ENCODE measurements at regions of chr7 and their contacts with region 1.

Region 1: DNA sequence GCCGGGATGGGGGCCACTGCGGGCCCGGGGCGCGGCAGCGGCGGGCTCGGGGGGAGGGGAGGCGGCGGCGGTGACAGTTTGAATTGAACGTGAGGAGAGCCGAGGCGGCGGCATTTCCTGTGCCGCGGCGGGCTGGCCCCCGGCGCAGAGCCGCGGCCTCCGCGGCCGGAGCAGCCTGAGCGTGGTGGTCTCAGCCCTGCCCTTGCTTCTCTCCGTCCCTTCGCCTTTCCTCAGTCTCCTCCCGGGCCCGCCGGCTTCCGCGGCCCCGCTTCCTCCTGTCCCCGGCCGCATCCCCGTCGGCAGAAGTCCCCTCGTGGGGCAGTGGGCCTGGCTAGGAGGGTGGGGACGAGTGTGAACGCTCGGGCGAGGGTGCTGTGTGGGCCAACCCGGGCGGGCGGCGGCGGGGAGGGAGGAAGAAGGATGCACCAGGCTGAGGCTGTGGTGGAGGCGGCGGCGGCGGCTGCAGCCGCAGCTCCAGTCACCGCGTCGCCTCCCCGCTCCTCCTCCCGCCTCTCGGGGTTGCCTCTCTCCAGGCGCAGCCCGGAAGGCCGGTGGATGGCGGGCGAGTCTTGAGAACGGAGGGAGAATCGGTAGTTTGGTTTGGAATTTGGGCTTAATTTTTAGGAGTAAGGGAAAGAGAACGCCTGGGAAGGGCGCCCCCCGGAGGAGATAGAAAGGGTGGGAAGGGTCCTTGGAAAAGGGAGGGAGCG is 690 bp downstream of the SEPTIN7 start:
- DNase-seq: peak; percentile 76
- H3K4me3 ChIP-seq: peak overlapping the region; percentile 74
- H3K27ac ChIP-seq: peak overlapping the region; percentile 98
- H3K4me1 ChIP-seq: peaks cover 3% of the 10 kb centered on the region
- H3K27me3 ChIP-seq: no peaks in the 10 kb centered on the region
- CTCF ChIP-seq: peak; percentile 46

Region 2: GRCh38 chr7:35714862-35715261 is 86.7 kb before region 1 on chr7:
- intact Hi-C with region 1: loop called (anchors 5 kb)
- DNase-seq: no peak
- H3K4me3 ChIP-seq: no peak overlapping the region
- H3K27ac ChIP-seq: no peak overlapping the region
- H3K4me1 ChIP-seq: no peaks in the 10 kb centered on the region
- H3K27me3 ChIP-seq: no peaks in the 10 kb centered on the region
- CTCF ChIP-seq: no peak

Region 3: DNA sequence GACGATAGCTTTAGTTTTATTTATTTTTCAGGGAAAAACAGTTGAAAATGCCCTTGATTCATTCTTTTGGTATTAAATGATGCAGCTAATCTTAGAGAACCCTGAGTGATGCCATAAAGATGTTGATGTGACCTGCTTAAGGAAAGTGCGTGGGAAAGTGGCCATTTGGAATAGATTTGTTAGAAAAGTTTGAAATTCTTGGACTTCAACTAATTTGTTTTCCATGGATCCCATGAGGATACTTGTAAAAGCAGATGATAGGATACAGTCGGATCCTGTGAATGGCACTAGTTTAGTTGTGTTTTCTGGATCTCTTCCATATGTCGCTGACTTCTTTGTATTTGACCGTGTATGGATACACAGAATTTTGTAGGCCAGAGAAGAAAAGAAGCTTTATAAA is 68.3 kb after region 1 on chr7:
- intact Hi-C with region 1: loop called (anchors 10 kb)
- DNase-seq: no peak
- H3K4me3 ChIP-seq: no peak overlapping the region
- H3K27ac ChIP-seq: no peak overlapping the region
- H3K4me1 ChIP-seq: no peaks in the 10 kb centered on the region
- H3K27me3 ChIP-seq: no peaks in the 10 kb centered on the region
- CTCF ChIP-seq: no peak

Region 4: DNA sequence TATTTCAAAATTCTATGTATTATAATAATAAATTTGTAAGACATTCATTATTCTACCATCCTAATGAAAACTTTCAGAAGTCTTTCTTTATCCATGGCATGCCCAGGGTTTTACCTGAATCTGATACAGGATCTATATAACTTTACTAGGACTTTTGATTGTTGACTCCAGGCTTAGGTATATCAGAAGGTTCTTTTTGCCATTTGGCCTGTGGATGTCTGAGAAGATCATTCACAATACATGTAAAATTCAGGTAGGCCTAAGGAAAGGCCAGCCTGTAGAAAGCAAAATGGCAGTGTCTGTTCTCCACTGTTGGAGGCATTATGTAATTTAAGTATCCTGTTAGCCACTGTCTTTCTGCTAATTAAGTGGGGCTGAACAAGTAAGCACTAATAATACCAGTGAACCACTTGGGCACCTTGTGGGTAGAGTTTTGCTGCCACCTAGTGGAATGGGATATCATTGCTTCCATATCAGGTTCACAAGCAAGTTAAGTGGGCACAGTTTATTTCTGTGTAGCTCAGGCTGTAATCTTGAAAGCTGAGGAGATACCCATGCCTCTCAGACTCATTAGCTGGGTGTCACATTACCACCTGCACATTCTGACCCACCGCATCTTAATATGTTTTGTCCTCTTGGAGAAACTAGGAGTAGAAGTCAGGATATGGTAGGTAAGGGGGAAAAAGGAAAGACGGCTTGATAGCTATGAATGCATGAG is 104.8 kb after region 1 on chr7:
- intact Hi-C with region 1: loop called (anchors 5 kb)
- DNase-seq: peak; percentile 69
- H3K4me3 ChIP-seq: no peak overlapping the region
- H3K27ac ChIP-seq: no peak overlapping the region
- H3K4me1 ChIP-seq: no peaks in the 10 kb centered on the region
- H3K27me3 ChIP-seq: no peaks in the 10 kb centered on the region
- CTCF ChIP-seq: peak; percentile 89

Measured in colonic mucosa (tissue), 4 donors.